Activated B cell treated with CpG ODN at 0.5 μM for 24 hours (primary cell): ENCODE measurements at regions of chr2 and their contacts with region 1.

Region 1: GRCh38 chr2:105576440-105577252 is 168.1 kb upstream of the NCK2 start:
- DNase-seq: no peak
- ATAC-seq: peak; percentile 40
- H3K4me3 Mint-ChIP-seq: no peak overlapping the region
- H3K27ac Mint-ChIP-seq: peak overlapping the region; percentile 60
- H3K4me1 Mint-ChIP-seq: peaks cover 7% of the 10 kb centered on the region
- H3K27me3 Mint-ChIP-seq: peaks cover 14% of the 10 kb centered on the region
- CTCF ChIP-seq: peak; percentile 33

Region 2: GRCh38 chr2:105888625-105889400 is 312.2 kb after region 1 on chr2:
- CTCF ChIA-PET with region 1: interaction called, 3 read pairs
- POLR2A ChIA-PET with region 1: no interaction called
- intact Hi-C with region 1: loop called (anchors 5 kb)
- DNase-seq: no peak
- ATAC-seq: no peak
- H3K4me3 Mint-ChIP-seq: no peak overlapping the region
- H3K27ac Mint-ChIP-seq: no peak overlapping the region
- H3K4me1 Mint-ChIP-seq: peaks cover 49% of the 10 kb centered on the region
- H3K27me3 Mint-ChIP-seq: no peaks in the 10 kb centered on the region
- CTCF ChIP-seq: no peak

Region 3: DNA sequence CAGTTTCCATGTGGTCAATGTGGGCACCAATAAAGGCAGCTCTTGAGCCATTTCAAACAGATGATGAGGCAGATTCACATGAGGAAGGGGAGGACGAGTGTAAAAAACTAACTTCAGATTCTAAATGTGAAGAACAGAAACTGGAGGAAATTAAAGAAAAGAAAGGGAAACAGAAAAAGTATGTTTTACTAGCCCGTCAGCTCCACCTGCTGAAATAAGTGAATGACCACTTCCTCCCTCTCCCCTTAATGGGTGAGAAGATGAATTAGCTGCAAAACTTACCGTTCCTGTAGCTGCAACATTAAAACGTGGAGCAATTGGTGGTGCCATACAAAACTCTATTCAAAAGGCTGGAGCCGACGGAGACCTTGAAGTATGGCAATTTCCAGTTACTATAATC is 414.0 kb after region 1 on chr2:
- CTCF ChIA-PET with region 1: interaction called, 14 read pairs
- POLR2A ChIA-PET with region 1: no interaction called
- intact Hi-C with region 1: loop called (anchors 1 kb)
- DNase-seq: no peak
- ATAC-seq: no peak
- H3K4me3 Mint-ChIP-seq: no peak overlapping the region
- H3K27ac Mint-ChIP-seq: no peak overlapping the region
- H3K4me1 Mint-ChIP-seq: no peaks in the 10 kb centered on the region
- H3K27me3 Mint-ChIP-seq: no peaks in the 10 kb centered on the region
- CTCF ChIP-seq: no peak

Region 4: DNA sequence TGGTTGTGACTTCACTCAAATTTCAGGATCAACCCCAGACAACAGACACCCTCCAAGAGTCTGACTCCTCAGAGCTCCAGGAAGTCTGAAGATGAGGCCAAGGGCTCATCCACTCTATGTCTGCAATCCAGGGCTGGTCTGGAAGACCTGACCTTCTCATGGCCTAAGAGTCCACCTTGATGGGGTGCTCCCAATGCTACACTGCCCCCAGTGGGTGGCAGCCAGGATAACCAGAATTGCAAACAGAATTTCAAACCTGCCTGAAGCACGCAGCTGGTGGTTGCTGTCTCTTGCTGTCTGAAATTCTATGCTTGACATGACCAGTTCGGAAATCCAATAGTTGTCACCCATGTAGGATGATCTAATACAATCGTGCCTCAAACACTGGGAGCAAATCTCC is 521.4 kb after region 1 on chr2:
- CTCF ChIA-PET with region 1: interaction called, 17 read pairs
- POLR2A ChIA-PET with region 1: no interaction called
- intact Hi-C with region 1: loop called (anchors 1 kb)
- DNase-seq: no peak
- ATAC-seq: no peak
- H3K4me3 Mint-ChIP-seq: no peak overlapping the region
- H3K27ac Mint-ChIP-seq: no peak overlapping the region
- H3K4me1 Mint-ChIP-seq: peaks cover 28% of the 10 kb centered on the region
- H3K27me3 Mint-ChIP-seq: no peaks in the 10 kb centered on the region
- CTCF ChIP-seq: no peak